HepG2 (cell line): ENCODE measurements at regions of chr19 and their contacts with region 1.

Region 1: DNA sequence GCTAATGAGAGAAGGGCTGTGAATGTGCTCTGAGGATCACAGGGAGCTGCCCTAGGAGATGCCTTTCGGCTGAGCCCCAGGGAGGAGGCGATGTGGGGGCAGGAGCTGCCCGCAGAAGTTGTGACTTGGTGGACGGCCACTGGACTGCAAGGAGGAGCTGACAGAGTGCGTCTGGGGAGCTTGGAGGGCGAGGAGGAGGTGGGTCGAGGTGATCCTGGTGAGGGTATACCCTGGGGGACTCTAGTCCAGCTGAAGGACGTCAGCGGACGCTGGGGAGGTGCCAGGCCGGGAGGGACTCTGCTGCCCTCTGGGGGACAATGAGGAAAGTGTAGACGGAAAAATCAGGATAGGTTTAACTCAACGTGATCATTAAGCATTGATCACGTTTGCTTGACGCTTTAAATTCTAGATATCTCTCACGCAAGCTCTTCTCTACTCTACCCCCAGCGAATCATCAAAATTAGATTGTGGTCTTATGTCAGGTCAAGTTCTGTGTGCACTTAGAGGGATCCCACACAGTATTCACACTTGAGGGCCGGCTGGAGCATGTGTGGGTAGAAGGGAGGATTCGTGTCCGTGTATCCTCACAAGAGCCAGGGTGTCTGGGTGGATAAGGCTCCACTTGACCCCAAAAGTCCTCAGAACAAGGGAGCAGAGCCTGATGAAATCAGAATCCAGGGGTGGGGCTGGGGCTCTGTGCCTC is 3.3 kb upstream of the CEACAM7 start:
- DNase-seq: no peak
- ATAC-seq: peak; percentile 71
- H3K4me3 ChIP-seq: no peak overlapping the region
- H3K27ac ChIP-seq: no peak overlapping the region
- H3K4me1 ChIP-seq: no peaks in the 10 kb centered on the region
- H3K27me3 ChIP-seq: no peaks in the 10 kb centered on the region; a peak in 1 of 5 replicates
- CTCF ChIP-seq: peak; percentile 70
- EP300 ChIP-seq: no peak
- POLR2A ChIP-seq: no peak
- RAD21 ChIP-seq: no peak

Region 2: DNA sequence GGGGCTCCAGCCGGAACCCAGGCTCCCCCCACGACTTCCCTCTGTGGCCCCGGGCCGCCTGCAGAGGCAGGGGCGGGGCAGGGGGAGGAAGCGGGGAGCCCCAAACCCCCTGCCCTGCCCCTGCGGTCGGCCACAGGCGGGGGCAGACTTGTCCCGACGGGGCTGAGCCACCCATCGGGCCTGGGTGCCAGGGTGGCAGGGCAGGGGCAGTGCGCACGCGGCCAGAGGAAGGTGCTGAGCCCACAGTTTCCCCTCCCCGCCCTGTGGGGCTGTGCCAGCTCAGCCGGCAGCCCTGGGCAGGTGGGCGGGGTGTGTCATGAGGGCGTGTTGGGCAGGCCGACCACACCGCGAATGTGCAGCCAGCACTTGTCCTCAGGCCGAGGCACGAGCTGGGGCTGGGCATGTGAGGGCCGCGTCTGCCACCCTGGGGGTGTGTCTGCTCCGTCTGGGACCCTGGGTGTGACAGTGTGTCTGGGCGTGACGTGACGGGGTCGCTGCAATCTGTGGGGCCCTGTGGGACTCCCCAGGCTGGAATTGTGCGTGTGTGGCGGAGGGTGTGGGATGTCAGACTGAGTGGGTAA is 363.8 kb before region 1 on chr19:
- CTCF ChIA-PET with region 1: no interaction called
- POLR2A ChIA-PET with region 1: no interaction called
- in situ Hi-C with region 1: no loop called
- intact Hi-C with region 1: no loop called
- DNase-seq: no peak
- ATAC-seq: no peak
- H3K4me3 ChIP-seq: no peak overlapping the region
- H3K27ac ChIP-seq: no peak overlapping the region
- H3K4me1 ChIP-seq: peaks cover 48% of the 10 kb centered on the region
- H3K27me3 ChIP-seq: no peaks in the 10 kb centered on the region
- CTCF ChIP-seq: no peak
- EP300 ChIP-seq: no peak
- POLR2A ChIP-seq: no peak
- RAD21 ChIP-seq: no peak

Region 3: GRCh38 chr19:41616792-41617621 is 74.4 kb before region 1 on chr19:
- CTCF ChIA-PET with region 1: no interaction called
- POLR2A ChIA-PET with region 1: no interaction called
- in situ Hi-C with region 1: no loop called
- intact Hi-C with region 1: no loop called
- DNase-seq: peak; percentile 9
- ATAC-seq: no peak
- H3K4me3 ChIP-seq: no peak overlapping the region
- H3K27ac ChIP-seq: no peak overlapping the region
- H3K4me1 ChIP-seq: no peaks in the 10 kb centered on the region
- H3K27me3 ChIP-seq: peaks cover 0 to 4% of the 10 kb centered on the region in 2 experiments; a peak in 1 of 5 replicates
- CTCF ChIP-seq: no peak
- EP300 ChIP-seq: no peak
- POLR2A ChIP-seq: no peak
- RAD21 ChIP-seq: no peak

Region 4: GRCh38 chr19:41641879-41642485 is 49.4 kb before region 1 on chr19:
- CTCF ChIA-PET with region 1: interaction called, 6 read pairs
- POLR2A ChIA-PET with region 1: no interaction called
- in situ Hi-C with region 1: no loop called
- intact Hi-C with region 1: loop called (anchors 5 kb)
- DNase-seq: peak; percentile 23
- ATAC-seq: peak; percentile 73
- H3K4me3 ChIP-seq: no peak overlapping the region
- H3K27ac ChIP-seq: no peak overlapping the region
- H3K4me1 ChIP-seq: no peaks in the 10 kb centered on the region
- H3K27me3 ChIP-seq: no peaks in the 10 kb centered on the region
- CTCF ChIP-seq: peak; percentile 86
- EP300 ChIP-seq: no peak
- POLR2A ChIP-seq: no peak
- RAD21 ChIP-seq: no peak